Common myeloid progenitor, CD34-positive (primary cell): ENCODE measurements at regions of chr16 and their contacts with region 1.

Region 1: DNA sequence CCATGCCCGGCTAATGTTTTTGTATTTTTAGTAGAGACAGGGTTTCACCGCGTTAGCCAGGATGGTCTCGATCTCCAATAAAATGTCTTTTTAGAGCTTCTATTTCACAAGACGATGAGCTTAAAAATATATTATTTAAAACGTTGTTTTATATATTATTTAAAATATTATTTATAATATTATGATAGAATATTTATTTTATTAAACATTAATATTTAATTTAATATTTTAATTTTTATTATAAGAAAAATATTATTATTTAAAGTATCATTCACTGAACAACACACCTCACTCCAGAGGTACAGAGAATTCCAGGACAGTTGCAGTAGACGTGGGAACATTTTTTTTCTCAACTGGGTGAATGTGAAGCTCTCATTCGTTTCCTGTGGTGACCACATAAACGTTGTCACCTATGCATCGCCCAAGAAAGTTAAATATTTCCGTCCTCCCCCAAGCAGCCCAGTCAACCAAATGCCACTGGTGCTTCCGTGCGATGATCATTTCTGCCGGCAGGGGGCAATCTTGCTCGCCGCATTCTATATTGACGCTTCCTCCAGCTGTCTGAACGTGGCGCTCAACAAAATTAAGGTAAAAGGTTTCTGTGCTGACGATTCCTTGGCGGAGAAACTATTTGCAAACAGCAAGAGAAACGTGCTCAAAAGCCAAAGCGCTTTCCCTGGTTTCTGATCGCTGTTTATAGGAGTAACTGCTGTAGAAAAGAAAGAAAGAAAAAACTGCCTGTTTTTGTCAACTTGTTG is 41.7 kb upstream of the PRSS54 start:
- DNase-seq: peak; percentile 72 to 83 (median 79)
- H3K4me3 ChIP-seq: peak overlapping the region in 3 of 7 experiments; percentile 34 to 57 (median 53)
- H3K27ac ChIP-seq: no peak overlapping the region
- H3K4me1 ChIP-seq: peaks cover 0 to 5% (median 4%) of the 10 kb centered on the region in 4 experiments
- H3K27me3 ChIP-seq: peaks cover 0 to 2% (median 2%) of the 10 kb centered on the region in 5 experiments

Region 2: DNA sequence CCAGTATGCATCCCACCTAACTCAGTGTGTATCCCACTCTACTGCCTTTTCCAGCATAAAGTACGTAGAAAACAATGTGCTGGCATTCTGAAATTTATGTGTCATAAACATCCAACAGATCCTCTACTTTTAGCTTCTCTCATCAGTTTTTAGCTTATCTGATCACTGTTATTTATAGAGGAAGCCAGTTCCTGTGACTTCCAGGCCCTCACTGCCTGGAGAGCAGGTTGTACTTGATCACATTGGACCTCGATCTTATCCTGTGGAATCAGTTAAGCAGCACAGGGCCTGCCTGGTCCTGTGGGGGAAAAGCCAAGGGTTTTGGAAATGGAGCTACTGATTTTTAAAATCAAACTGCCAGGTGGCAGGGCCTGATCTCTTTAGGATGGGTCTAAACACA is 72.5 kb before region 1 on chr16:
- CTCF ChIA-PET with region 1: no interaction called
- POLR2A ChIA-PET with region 1: no interaction called
- DNase-seq: no peak
- H3K4me3 ChIP-seq: no peak overlapping the region
- H3K27ac ChIP-seq: no peak overlapping the region
- H3K4me1 ChIP-seq: peaks cover 0 to 17% (median 0%) of the 10 kb centered on the region in 4 experiments
- H3K27me3 ChIP-seq: no peaks in the 10 kb centered on the region

Region 3: DNA sequence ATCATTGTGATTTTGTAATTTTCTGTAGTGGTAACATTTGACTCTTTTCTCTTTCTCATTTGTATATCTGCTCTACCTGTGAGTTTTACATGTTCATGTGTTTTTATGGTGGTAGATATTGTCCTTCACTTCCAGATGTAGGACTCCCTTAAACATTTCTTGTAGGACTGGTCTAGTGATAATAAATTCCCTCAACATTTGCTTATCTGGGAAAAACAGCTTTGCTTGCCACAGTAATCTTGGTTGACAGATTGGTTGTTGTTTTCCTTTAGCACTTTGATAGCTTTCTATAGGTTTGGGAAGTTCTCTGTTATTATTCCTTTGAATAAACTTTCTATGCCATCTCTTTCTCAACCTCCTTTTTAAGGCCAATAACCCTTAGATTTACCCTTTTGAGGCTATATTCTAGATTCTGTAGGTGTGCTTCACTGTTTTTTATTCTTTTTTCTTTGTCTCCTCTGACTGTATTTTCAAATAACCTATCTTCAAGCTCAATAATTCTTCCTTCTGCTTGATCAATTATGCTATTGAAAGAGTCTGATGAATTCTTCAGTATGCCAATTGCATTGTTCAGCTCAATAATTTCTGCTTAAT is 23.6 kb after region 1 on chr16:
- CTCF ChIA-PET with region 1: interaction called, 11 read pairs
- POLR2A ChIA-PET with region 1: no interaction called
- DNase-seq: peak in 1 of 3 donors; percentile 12
- H3K4me3 ChIP-seq: no peak overlapping the region
- H3K27ac ChIP-seq: no peak overlapping the region
- H3K4me1 ChIP-seq: no peaks in the 10 kb centered on the region
- H3K27me3 ChIP-seq: no peaks in the 10 kb centered on the region

Region 4: DNA sequence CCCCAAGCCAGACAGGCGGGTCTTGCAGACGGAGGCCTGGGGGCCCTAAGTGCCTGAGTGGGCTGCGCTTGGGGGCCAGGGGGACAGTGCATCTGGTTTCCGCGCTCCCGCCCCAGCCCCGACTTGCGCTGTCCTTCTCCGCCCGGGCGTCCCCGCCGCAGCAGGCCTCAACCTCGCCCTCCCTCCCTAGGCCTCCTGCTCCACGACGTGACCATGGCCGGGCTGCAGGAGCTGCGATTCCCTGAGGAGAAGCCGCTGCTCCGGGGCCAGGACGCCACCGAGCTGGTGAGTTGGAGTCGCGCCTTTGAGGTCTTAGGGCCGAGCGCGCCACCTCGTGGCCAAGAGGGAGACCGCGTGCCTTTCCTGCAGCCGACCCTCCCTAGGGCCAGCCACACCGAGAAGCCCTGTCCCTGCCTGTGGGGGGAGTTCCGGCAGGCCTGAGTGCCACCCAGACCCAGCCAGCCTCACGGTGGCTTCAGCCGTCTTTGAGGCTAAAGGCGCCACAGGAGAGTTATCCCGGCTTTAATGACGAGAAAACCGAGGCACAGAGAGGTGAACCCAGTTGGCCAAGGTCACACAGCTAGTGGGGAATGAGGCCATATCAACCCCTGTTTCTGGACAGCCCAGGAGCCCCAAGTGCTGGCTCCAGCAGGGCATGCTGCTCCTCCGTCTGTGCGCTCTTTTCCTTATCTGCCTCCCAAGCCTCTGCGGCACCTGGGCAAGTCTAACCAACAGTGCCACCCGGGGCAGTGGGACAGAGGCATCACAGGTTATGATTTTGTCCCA is 151.2 kb after region 1 on chr16:
- CTCF ChIA-PET with region 1: interaction called, 138 read pairs
- POLR2A ChIA-PET with region 1: interaction called, 3 read pairs
- DNase-seq: peak; percentile 68 to 77 (median 75)
- H3K4me3 ChIP-seq: peak overlapping the region in 3 of 7 experiments; percentile 11 to 58 (median 42)
- H3K27ac ChIP-seq: no peak overlapping the region
- H3K4me1 ChIP-seq: peaks cover 0 to 4% (median 3%) of the 10 kb centered on the region in 4 experiments
- H3K27me3 ChIP-seq: peaks cover 0 to 3% (median 0%) of the 10 kb centered on the region in 5 experiments

Region 5: DNA sequence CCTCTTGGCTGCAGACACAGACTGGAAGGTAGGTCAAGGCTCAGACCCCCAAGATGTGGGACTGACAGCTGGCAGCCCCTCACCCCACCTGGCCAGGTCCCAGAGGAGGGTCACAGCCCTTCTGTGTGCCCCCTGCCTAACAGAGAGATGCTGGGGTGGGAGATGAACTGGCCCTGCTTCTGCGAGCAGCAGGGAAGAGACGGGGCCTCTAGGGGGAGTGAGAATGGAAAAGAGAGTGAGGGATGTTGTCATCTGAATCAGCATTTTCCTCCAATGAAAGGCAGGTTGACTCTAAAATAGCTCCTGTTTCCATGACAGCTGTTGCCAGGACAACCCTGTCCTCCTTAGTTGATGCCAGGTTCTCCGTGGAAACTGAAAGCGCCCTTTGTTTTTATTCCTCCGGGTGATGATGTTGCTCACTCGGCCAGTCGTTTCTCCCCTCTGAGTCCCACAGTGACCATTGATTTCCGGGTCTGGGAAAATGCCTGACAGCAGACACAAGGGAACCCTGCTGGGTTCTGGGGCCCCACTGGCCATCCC is 158.5 kb after region 1 on chr16:
- CTCF ChIA-PET with region 1: interaction called, 23 read pairs
- POLR2A ChIA-PET with region 1: no interaction called
- DNase-seq: peak; percentile 98 to 99 (median 98)
- H3K4me3 ChIP-seq: peak overlapping the region in 2 of 7 experiments; percentile 14 to 32
- H3K27ac ChIP-seq: no peak overlapping the region
- H3K4me1 ChIP-seq: peaks cover 0 to 11% (median 5%) of the 10 kb centered on the region in 4 experiments
- H3K27me3 ChIP-seq: peaks cover 0 to 13% (median 2%) of the 10 kb centered on the region in 5 experiments

Region 6: GRCh38 chr16:58515125-58515870 is 178.8 kb after region 1 on chr16 and contains the start of gene SETD6:
- CTCF ChIA-PET with region 1: interaction called, 17 read pairs
- POLR2A ChIA-PET with region 1: no interaction called
- DNase-seq: peak; percentile 55 to 80 (median 72)
- H3K4me3 ChIP-seq: peak within 1 kb of the TSS; percentile 75 to 92 (median 78)
- H3K27ac ChIP-seq: peak within 1 kb of the TSS in 1 of 2 experiments; percentile 74
- H3K4me1 ChIP-seq: peaks cover 0 to 21% (median 17%) of the 10 kb centered on the region in 4 experiments
- H3K27me3 ChIP-seq: no peaks in the 10 kb centered on the region